ENCODE measurements at regions of chr22 and their contacts with region 1.

Region 1: GRCh38 chr22:50326959-50327710 is at the start of gene DENND6B:
- DNase-seq: peak; percentile 20 to 77 (median 66)
- ATAC-seq: peak; percentile 92 to 93
- H3K4me3 Mint-ChIP-seq: peak within 1 kb of the TSS; percentile 78 to 89 (median 82)
- H3K27ac Mint-ChIP-seq: peak within 1 kb of the TSS; percentile 44 to 85 (median 80)
- H3K4me1 Mint-ChIP-seq: peaks cover 7 to 14% (median 12%) of the 10 kb centered on the region in 4 donors
- H3K27me3 Mint-ChIP-seq: peaks cover 0 to 3% (median 0%) of the 10 kb centered on the region in 5 donors
- polyA plus RNA-seq, gene DENND6B: 0.53 to 1.1 (median 1.0) TPM

Region 2: GRCh38 chr22:50141891-50142363 is 185.2 kb before region 1 on chr22:
- POLR2A ChIA-PET with region 1: no interaction called
- DNase-seq: no peak
- ATAC-seq: no peak
- H3K4me3 Mint-ChIP-seq: no peak overlapping the region
- H3K27ac Mint-ChIP-seq: no peak overlapping the region
- H3K4me1 Mint-ChIP-seq: peaks cover 0 to 3% (median 0%) of the 10 kb centered on the region in 4 donors
- H3K27me3 Mint-ChIP-seq: peaks cover 0 to 8% (median 7%) of the 10 kb centered on the region in 5 donors

Region 3: GRCh38 chr22:50250555-50251476 is 76.3 kb before region 1 on chr22 and contains the start of gene HDAC10:
- POLR2A ChIA-PET with region 1: interaction called, 15 read pairs
- DNase-seq: peak; percentile 59 to 87 (median 71)
- ATAC-seq: peak; percentile 72 to 82
- H3K4me3 Mint-ChIP-seq: peak within 1 kb of the TSS; percentile 60 to 87 (median 77)
- H3K27ac Mint-ChIP-seq: peak within 1 kb of the TSS; percentile 23 to 83 (median 62)
- H3K4me1 Mint-ChIP-seq: peaks cover 0 to 25% (median 7%) of the 10 kb centered on the region in 4 donors
- H3K27me3 Mint-ChIP-seq: no peaks in the 10 kb centered on the region
- polyA plus RNA-seq, gene HDAC10: 5.4 to 7.8 (median 6.4) TPM

Region 4: GRCh38 chr22:50314455-50315288 is 12.5 kb before region 1 on chr22:
- POLR2A ChIA-PET with region 1: interaction called, 13 read pairs
- DNase-seq: peak; percentile 39 to 83 (median 65)
- ATAC-seq: peak; percentile 93 to 95
- H3K4me3 Mint-ChIP-seq: peak overlapping the region; percentile 80 to 99 (median 90)
- H3K27ac Mint-ChIP-seq: peak overlapping the region; percentile 87 to 97 (median 94)
- H3K4me1 Mint-ChIP-seq: peaks cover 13 to 22% (median 20%) of the 10 kb centered on the region in 4 donors
- H3K27me3 Mint-ChIP-seq: no peaks in the 10 kb centered on the region

Region 5: GRCh38 chr22:50341977-50342650 is 15.0 kb after region 1 on chr22:
- POLR2A ChIA-PET with region 1: no interaction called
- DNase-seq: peak; percentile 72 to 93 (median 87)
- ATAC-seq: peak; percentile 61 to 63
- H3K4me3 Mint-ChIP-seq: peak overlapping the region; percentile 72 to 92 (median 88)
- H3K27ac Mint-ChIP-seq: peak overlapping the region; percentile 74 to 96 (median 94)
- H3K4me1 Mint-ChIP-seq: peaks cover 0 to 12% (median 5%) of the 10 kb centered on the region in 4 donors
- H3K27me3 Mint-ChIP-seq: no peaks in the 10 kb centered on the region

Region 6: DNA sequence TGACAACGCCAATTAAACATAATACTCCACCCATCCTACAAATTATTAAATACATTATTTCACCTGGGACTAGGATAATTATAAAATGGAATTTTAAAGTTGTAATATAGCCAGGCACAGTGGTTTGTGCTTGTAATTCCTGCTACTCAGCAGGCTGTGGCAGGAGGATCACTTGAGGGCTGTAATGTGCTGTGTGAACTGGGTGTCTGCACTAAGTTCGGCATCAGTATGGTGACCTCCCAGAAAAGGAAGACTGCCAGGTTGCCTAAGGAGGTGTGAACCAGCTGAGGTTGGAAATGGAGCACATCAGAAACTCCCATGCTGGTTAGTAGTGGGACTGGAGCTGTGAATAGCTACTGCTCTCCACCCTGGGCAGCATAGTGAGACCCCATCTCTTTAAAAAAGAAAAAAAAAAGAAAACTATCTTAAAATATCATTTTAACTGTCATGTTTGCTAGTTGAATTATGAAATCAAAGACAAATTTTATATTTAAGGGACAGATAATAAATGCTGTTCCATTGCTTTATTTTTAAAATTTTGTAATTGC is 44.0 kb after region 1 on chr22:
- POLR2A ChIA-PET with region 1: no interaction called
- DNase-seq: no peak
- ATAC-seq: no peak
- H3K4me3 Mint-ChIP-seq: no peak overlapping the region
- H3K27ac Mint-ChIP-seq: no peak overlapping the region
- H3K4me1 Mint-ChIP-seq: peaks cover 14 to 26% (median 16%) of the 10 kb centered on the region in 4 donors
- H3K27me3 Mint-ChIP-seq: no peaks in the 10 kb centered on the region